Left lung (tissue), 14 donors: ENCODE measurements at regions of chr5 and their contacts with region 1.

Region 1: GRCh38 chr5:58886315-58887207 is 303.7 kb downstream of the RAB3C start:
- DNase-seq: peak; percentile 50 to 84 (median 60)
- ATAC-seq: peak; percentile 89
- H3K4me3 ChIP-seq: no peak overlapping the region
- H3K27ac ChIP-seq: peak overlapping the region in 1 of 2 donors; percentile 78
- H3K4me1 ChIP-seq: peaks cover 3 to 15% of the 10 kb centered on the region in 2 donors
- H3K27me3 ChIP-seq: no peaks in the 10 kb centered on the region
- CTCF ChIP-seq: peak; percentile 75 to 91

Region 2: DNA sequence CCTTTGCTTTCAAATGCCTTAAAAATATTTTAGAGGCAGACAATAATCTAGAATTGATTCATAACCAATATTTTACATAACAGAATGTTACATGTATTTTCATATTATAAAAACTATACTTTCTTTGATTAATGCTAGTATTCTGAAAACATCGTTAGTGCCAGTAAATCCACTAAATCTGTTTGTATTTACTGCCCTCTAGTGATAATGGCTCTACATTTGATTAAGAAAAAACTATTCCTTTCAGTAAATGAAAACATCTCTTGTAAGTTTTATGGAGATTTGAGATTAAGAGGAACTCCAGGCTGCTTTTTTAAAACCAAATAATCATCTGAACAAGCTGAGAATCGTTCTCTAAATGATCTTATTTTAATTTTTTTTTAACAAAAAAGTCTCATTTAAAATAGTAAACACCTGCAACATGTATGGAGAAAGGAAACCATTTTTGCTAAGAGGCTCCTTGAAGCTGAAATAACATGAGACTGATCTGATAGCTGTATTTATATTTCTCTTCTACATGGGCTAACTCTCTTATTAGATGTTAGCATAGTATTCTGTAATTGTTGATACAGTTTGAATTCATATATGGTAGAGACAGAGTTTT is 121.0 kb after region 1 on chr5:
- intact Hi-C with region 1: loop called in 1 of 2 experiments (anchors 10 kb)
- DNase-seq: peak in 1 of 4 donors; percentile 13
- ATAC-seq: peak; percentile 45
- H3K4me3 ChIP-seq: no peak overlapping the region
- H3K27ac ChIP-seq: no peak overlapping the region
- H3K4me1 ChIP-seq: peaks cover 0 to 15% of the 10 kb centered on the region in 2 donors
- H3K27me3 ChIP-seq: no peaks in the 10 kb centered on the region
- CTCF ChIP-seq: peak in 1 of 2 donors; percentile 11

Region 3: GRCh38 chr5:59174248-59174844 is 287.8 kb after region 1 on chr5:
- intact Hi-C with region 1: loop called in 1 of 2 experiments (anchors 10 kb)
- DNase-seq: peak in 1 of 4 donors; percentile 75
- ATAC-seq: peak; percentile 92
- H3K4me3 ChIP-seq: no peak overlapping the region
- H3K27ac ChIP-seq: no peak overlapping the region
- H3K4me1 ChIP-seq: peaks cover 0 to 5% of the 10 kb centered on the region in 2 donors
- H3K27me3 ChIP-seq: no peaks in the 10 kb centered on the region
- CTCF ChIP-seq: peak; percentile 67